Endothelial cell of umbilical vein (primary cell): ENCODE measurements at regions of chr11 and their contacts with region 1.

Region 1: DNA sequence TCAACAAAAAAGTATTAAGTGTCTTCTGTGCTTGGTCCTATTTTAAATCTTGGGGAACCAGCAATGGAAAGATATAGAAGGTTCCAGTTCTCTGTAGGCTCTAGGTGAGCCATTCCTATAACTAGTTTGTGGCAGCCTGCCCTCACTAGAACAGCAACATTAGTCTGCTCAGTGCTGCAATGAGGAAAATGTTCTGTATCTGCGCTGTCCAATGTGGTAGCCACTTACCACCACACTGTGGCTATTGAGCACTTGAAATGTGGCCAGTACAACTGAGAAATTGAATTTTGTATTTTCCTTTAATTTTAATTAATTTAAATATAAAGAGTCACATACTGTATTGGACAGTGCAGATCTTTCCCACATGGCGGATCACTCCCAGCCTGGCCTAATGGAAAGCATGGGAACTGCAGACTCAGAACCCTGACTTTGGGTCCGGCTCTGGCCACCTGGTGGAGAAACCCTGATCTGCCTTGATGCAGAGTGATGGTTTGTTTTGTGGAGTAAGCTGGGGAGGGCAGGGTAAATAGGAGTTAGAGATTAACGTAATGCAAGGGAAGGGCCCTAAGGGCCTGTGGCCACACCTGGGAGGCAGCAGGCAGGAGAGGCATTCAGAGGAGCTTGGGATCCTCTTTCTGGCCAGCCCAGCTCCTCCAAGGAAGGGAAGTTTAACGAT is 101.0 kb downstream of the ME3 start:
- DNase-seq: peak; percentile 37
- H3K4me3 ChIP-seq: no peak overlapping the region
- H3K27ac ChIP-seq: no peak overlapping the region
- H3K4me1 ChIP-seq: peaks cover 38% of the 10 kb centered on the region
- H3K27me3 ChIP-seq: no peaks in the 10 kb centered on the region
- CTCF ChIP-seq: peak; percentile 48 to 56
- POLR2A ChIP-seq: no peak

Region 2: DNA sequence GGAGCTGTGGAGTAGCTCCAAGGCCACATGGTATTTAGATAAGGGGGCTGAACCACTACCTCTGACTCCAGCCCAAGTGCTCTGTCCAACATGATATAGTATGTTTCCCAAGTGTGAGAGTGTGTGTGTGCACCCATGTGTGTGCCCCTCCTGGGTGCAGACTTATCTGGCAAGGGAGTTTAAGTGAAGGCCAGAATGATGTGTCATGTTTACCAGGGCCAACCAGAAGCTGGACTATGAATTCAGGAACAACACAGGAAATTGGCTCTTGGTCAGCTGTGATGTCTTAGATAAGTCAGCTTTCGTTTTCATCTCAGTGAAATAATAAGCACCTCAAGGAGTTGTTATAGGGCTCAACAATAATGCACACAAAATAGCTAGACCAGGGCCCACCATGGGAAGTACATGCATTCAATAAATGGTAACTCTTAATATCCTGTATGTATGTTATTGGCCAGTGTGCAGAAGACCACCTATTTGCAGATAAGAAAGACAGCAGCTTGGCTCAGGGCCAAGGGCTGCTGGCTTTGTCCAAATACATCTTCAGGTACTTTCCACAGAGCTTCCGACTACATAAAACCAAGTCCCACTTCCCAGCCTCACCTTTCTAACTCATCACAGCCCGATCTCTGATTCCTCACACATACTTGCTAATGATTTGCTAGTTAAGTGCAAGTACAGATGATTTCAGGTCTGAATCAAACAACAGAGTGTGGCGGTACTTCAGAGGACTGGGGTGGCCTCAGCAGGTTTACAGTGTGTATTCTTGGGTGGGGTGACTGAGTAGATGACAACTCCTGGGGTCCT is 19.9 kb before region 1 on chr11:
- CTCF ChIA-PET with region 1: interaction called, 3 read pairs
- POLR2A ChIA-PET with region 1: interaction called, 4 read pairs
- dilution Hi-C with region 1: no loop called
- intact Hi-C with region 1: loop called (anchors 1 kb)
- DNase-seq: peak; percentile 96
- H3K4me3 ChIP-seq: no peak overlapping the region
- H3K27ac ChIP-seq: peak overlapping the region; percentile 71
- H3K4me1 ChIP-seq: peaks cover 44% of the 10 kb centered on the region
- H3K27me3 ChIP-seq: no peaks in the 10 kb centered on the region
- CTCF ChIP-seq: no peak
- POLR2A ChIP-seq: no peak